ENCODE measurements at regions of chr10 and their contacts with region 1.

Region 1: GRCh38 chr10:29446327-29446726 is 157.5 kb downstream of the LYZL1 start:
- H3K4me3 ChIP-seq: no peak overlapping the region
- H3K27ac ChIP-seq: no peak overlapping the region
- H3K4me1 ChIP-seq: no peaks in the 10 kb centered on the region
- CTCF ChIP-seq: no peak

Region 2: GRCh38 chr10:29435809-29436501 is 10.4 kb before region 1 on chr10:
- CTCF ChIA-PET with region 1: interaction called, 14 read pairs
- POLR2A ChIA-PET with region 1: no interaction called
- H3K4me3 ChIP-seq: no peak overlapping the region
- H3K27ac ChIP-seq: no peak overlapping the region
- H3K4me1 ChIP-seq: no peaks in the 10 kb centered on the region
- CTCF ChIP-seq: no peak